A549 (cell line): ENCODE measurements at regions of chr12 and their contacts with region 1.

Region 1: DNA sequence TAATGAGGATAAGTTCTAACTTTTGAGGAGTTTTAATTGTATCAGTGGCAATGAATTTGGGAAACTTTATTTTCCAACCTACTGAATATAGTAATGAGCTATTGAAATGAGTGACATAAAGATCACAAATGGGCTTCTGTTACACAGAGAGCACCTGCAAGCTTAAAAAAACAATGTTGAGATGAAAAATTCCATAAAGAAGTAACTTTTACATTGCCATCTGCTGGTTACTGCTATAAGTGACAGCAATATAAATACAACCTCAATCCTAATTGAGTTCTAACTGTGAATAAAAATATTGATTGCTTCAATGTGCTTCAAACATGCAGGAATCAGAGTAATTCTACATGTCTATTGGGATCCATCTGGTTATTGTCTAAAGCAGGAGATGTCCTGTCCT is 14.2 kb downstream of the WIF1 start:
- DNase-seq: peak; percentile 12 to 15
- ATAC-seq: no peak
- H3K4me3 ChIP-seq: no peak overlapping the region
- H3K27ac ChIP-seq: no peak overlapping the region
- H3K4me1 ChIP-seq: no peaks in the 10 kb centered on the region
- CTCF ChIP-seq: peak; percentile 50
- EP300 ChIP-seq: no peak
- POLR2A ChIP-seq: no peak
- RAD21 ChIP-seq: peak; percentile 22 to 33; a peak in 2 of 5 replicates

Region 2: DNA sequence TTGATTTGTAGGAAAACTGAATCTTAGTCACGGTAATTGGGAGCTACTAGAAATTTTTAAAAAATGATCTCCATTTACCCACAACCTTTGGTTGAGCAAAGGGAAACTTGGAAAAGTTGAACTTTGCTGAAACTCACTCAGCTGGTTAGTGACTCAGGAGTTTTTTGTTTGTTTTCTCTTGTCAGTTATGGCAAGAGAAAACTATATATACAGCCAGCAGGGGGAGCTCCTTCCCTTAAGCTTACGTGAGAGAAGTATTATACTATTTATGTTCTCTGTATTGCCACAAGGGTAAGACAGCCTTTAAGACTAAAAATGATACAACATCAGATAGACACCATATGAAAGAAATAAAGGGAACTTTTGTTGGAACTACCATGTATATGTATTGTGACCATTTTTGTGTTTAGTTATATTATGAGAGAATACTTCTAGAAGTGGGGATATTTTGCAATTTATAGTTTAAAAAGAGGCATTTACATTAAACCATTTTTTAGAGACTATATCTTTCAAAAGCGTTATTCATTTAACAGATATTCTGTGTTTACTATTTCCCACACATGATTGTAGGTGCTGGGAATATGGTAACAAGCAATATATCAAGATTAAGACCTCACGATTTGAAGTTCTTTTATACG is 310.6 kb before region 1 on chr12:
- CTCF ChIA-PET with region 1: interaction called, 36 read pairs
- POLR2A ChIA-PET with region 1: no interaction called
- DNase-seq: peak; percentile 91 to 96
- ATAC-seq: peak; percentile 89 to 95
- H3K4me3 ChIP-seq: no peak overlapping the region
- H3K27ac ChIP-seq: peak overlapping the region; percentile 66 to 70; a peak in 5 of 6 replicates
- H3K4me1 ChIP-seq: peaks cover 24% of the 10 kb centered on the region
- CTCF ChIP-seq: peak; percentile 93
- EP300 ChIP-seq: no peak
- POLR2A ChIP-seq: no peak
- RAD21 ChIP-seq: peak; percentile 74 to 81

Region 3: DNA sequence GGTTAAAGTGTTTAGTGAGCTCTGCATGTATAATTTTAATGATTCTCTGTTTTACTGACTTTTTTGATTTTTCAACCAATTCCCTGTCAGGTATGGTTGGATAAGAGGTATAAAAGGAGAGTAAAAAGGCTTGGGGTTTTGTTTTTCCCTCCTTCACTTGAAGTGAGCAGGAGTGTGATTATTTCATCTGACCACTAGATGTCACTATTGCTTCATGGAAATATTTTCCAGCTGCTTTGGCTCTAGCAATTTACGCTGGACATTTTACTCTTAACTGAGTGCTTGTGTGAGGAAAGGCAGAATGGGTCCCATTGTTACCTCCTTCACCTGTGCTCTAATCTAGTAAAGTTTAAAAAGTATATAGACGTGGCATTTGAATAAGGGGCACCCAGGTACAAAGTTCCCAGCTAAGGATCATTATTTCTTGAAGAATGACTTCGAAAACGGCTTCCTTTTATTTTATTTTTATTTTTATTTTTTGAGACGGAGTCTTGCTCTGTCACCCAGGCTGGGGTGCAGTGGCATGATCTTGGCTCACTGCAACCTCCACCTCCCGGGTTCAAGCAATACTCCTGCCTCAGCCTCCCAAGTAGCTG is 216.0 kb before region 1 on chr12:
- CTCF ChIA-PET with region 1: interaction called, 67 read pairs
- POLR2A ChIA-PET with region 1: no interaction called
- DNase-seq: peak; percentile 44 to 62
- ATAC-seq: peak; percentile 68 to 87; a peak in 4 of 6 replicates
- H3K4me3 ChIP-seq: no peak overlapping the region
- H3K27ac ChIP-seq: no peak overlapping the region
- H3K4me1 ChIP-seq: no peaks in the 10 kb centered on the region
- CTCF ChIP-seq: peak; percentile 84
- EP300 ChIP-seq: no peak
- POLR2A ChIP-seq: no peak
- RAD21 ChIP-seq: peak; percentile 92 to 93

Region 4: GRCh38 chr12:65093606-65094005 is 13.3 kb before region 1 on chr12:
- CTCF ChIA-PET with region 1: interaction called, 10 read pairs
- POLR2A ChIA-PET with region 1: no interaction called
- DNase-seq: no peak
- ATAC-seq: no peak
- H3K4me3 ChIP-seq: no peak overlapping the region
- H3K27ac ChIP-seq: no peak overlapping the region
- H3K4me1 ChIP-seq: no peaks in the 10 kb centered on the region
- CTCF ChIP-seq: no peak
- EP300 ChIP-seq: no peak
- POLR2A ChIP-seq: no peak
- RAD21 ChIP-seq: no peak

Region 5: GRCh38 chr12:65121049-65121955 is 14.4 kb after region 1 on chr12 and contains the start of gene WIF1:
- CTCF ChIA-PET with region 1: interaction called, 27 read pairs
- POLR2A ChIA-PET with region 1: no interaction called
- DNase-seq: peak in 1 of 2 experiments; percentile 29
- ATAC-seq: peak; percentile 83 to 92
- H3K4me3 ChIP-seq: peak within 1 kb of the TSS; percentile 40
- H3K27ac ChIP-seq: 0 out of 6 replicates have a peak within 1 kb of the TSS, but pooled peaks of 1 of the 2 experiments have one; percentile 19
- H3K4me1 ChIP-seq: no peaks in the 10 kb centered on the region; the same call in 2 of the 3 replicates
- CTCF ChIP-seq: peak; percentile 43; the same call in 2 of the 3 replicates
- EP300 ChIP-seq: no peak
- POLR2A ChIP-seq: no peak
- RAD21 ChIP-seq: no peak
- polyA plus RNA-seq, gene WIF1: not detected in 2 replicates